ENCODE measurements at regions of chr3 and their contacts with region 1.

Region 1: DNA sequence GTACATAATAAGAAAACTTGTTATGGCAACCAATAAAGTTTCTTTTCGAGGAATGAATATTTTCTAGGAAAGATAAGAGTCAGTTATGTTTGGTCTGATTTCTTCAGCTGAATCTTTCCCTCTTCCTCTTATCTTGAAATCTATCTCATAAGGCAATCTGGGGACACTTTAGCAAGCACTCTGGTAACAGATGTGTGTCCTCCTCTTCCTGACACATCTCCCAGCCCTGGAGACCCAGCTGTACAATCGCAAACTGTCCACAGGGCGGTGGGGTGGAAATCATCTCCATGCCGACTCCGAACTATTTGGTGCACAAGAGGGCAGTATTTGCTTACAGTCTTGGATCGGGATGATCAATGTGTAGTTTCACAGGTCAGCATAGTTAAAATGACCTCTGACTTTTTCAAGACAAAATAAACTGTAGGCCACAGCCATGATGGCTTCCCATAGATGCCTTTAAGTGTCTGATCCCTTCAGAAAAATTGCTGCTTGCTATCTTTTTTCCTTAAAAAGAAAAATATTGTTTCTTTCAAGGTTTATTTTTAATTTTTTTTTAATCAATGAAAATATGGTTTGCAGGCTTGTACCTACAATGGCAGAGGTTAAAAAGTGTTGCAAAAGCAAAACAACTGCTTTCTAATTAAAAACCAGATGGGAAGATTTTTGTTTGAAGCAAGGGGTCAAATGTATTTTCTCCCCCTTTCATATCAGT is 17.7 kb downstream of the EEFSEC start:
- DNase-seq: peak; percentile 60 to 63
- H3K4me3 ChIP-seq: no peak overlapping the region
- H3K27ac ChIP-seq: no peak overlapping the region
- H3K4me1 ChIP-seq: peaks cover 8 to 14% of the 10 kb centered on the region in 2 donors
- H3K27me3 ChIP-seq: no peaks in the 10 kb centered on the region
- CTCF ChIP-seq: peak; percentile 23 to 89 (median 74)
- POLR2A ChIP-seq: no peak

Region 2: DNA sequence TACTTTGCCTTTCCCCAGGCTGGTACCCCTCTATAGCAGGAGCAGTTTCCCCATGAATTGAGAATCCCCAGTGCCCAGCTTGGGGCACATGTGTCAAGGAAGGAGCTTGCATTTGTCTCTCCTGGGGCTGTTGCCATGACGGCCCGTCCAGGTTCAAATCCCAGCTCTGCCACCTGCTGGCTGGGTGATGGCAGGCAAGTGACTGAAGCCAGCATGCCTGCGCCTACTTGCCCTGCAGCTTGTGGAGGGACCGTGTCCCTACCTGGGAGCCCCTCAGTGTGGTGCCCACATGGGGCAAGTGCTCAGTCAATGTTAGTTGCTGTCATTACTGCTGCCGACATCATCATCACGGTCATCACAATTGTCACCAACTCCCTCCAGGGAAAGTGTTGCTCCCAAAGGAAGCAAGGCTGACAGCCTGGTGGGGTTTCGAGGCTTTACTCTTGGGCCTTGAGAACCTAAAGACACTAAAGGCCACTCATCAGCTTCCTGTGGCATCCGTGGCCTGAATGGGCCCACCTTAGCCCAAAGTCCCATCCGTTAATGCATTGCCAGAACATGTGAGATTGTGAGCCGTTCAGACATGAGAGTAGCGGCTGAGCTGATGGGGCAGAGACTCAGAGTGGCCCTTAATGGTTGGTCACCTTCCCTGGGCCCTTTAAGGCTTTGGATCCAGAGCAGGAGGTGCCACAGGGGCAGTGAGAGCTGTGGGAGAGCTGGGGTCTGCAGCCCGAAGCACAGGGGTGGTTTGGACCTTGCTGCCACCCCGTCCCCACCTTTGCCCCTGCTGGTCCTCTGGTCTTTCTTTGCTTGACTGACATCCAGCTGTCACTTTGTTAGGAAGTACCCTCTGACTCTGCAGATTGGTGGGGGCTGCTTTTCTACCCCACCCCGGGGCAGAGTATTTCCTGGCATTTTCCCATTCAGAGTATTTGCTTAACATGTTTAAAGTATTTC is 151.4 kb after region 1 on chr3:
- intact Hi-C with region 1: loop called (anchors 10 kb)
- DNase-seq: peak; percentile 53
- H3K4me3 ChIP-seq: no peak overlapping the region
- H3K27ac ChIP-seq: no peak overlapping the region
- H3K4me1 ChIP-seq: no peaks in the 10 kb centered on the region
- H3K27me3 ChIP-seq: no peaks in the 10 kb centered on the region
- CTCF ChIP-seq: peak in 4 of 6 experiments; percentile 40 to 46 (median 43)
- POLR2A ChIP-seq: no peak

Region 3: DNA sequence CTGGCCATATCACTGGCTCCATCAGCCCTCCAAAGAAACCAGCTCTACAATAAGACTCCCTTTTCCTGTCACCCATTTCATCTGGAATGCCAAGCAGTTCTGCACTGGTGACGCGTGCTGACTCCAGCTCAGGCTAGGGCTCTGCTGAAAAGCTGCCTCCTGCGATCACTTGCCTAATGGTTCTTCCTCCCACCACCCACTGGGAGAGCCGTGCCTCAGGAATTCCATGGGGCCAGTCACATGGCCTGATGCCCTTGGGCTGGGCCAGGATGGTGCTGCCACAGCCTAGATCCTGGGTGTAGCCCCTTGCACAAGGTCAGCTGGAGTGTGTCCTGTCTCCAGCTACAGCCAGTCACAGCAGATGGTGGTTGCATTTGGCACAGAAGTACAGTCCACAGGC is 196.8 kb after region 1 on chr3:
- intact Hi-C with region 1: no loop called
- DNase-seq: no peak
- H3K4me3 ChIP-seq: no peak overlapping the region
- H3K27ac ChIP-seq: no peak overlapping the region
- H3K4me1 ChIP-seq: no peaks in the 10 kb centered on the region
- H3K27me3 ChIP-seq: no peaks in the 10 kb centered on the region
- CTCF ChIP-seq: no peak
- POLR2A ChIP-seq: no peak

Region 4: GRCh38 chr3:128487813-128488635 is 317.1 kb after region 1 on chr3:
- intact Hi-C with region 1: loop called (anchors 5 kb)
- DNase-seq: peak; percentile 62 to 72
- H3K4me3 ChIP-seq: peak overlapping the region in 2 of 3 donors; percentile 28 to 60
- H3K27ac ChIP-seq: peak overlapping the region; percentile 76 to 81 (median 80)
- H3K4me1 ChIP-seq: peaks cover 21 to 60% of the 10 kb centered on the region in 2 donors
- H3K27me3 ChIP-seq: peaks cover 54% of the 10 kb centered on the region
- CTCF ChIP-seq: no peak
- POLR2A ChIP-seq: peak in 1 of 2 donors; percentile 75

Region 5: GRCh38 chr3:128497387-128498126 is 326.6 kb after region 1 on chr3:
- intact Hi-C with region 1: loop called (anchors 5 kb)
- DNase-seq: peak; percentile 51 to 56
- H3K4me3 ChIP-seq: peak overlapping the region in 1 of 3 donors; percentile 34
- H3K27ac ChIP-seq: no peak overlapping the region
- H3K4me1 ChIP-seq: peaks cover 6 to 22% of the 10 kb centered on the region in 2 donors
- H3K27me3 ChIP-seq: peaks cover 3% of the 10 kb centered on the region
- CTCF ChIP-seq: peak in 5 of 6 experiments; percentile 41 to 93 (median 45)
- POLR2A ChIP-seq: no peak

Measured in thyroid gland (tissue), 4 donors.